Ovary (tissue), 10 donors: ENCODE measurements at regions of chr3 and their contacts with region 1.

Region 1: GRCh38 chr3:197906023-197906849 is 43.8 kb upstream of the RPL35A start:
- DNase-seq: peak; percentile 90 to 94 (median 93)
- H3K4me3 ChIP-seq: no peak overlapping the region
- H3K27ac ChIP-seq: no peak overlapping the region
- H3K4me1 ChIP-seq: peaks cover 2% of the 10 kb centered on the region
- H3K27me3 ChIP-seq: no peaks in the 10 kb centered on the region
- CTCF ChIP-seq: peak; percentile 80 to 92 (median 89)
- EP300 ChIP-seq: no peak
- POLR2A ChIP-seq: no peak

Region 2: GRCh38 chr3:197749601-197750395 is 156.4 kb before region 1 on chr3 and contains the start of gene FYTTD1:
- intact Hi-C with region 1: no loop called
- DNase-seq: peak; percentile 86 to 95 (median 90)
- H3K4me3 ChIP-seq: peak within 1 kb of the TSS; percentile 85
- H3K27ac ChIP-seq: peak within 1 kb of the TSS; percentile 87 to 93
- H3K4me1 ChIP-seq: peaks cover 4% of the 10 kb centered on the region
- H3K27me3 ChIP-seq: no peaks in the 10 kb centered on the region
- CTCF ChIP-seq: peak; percentile 37 to 82 (median 70)
- EP300 ChIP-seq: no peak
- POLR2A ChIP-seq: peak; percentile 85
- total RNA-seq, gene FYTTD1: 23.8 to 70.5 (median 58.0) TPM

Region 3: DNA sequence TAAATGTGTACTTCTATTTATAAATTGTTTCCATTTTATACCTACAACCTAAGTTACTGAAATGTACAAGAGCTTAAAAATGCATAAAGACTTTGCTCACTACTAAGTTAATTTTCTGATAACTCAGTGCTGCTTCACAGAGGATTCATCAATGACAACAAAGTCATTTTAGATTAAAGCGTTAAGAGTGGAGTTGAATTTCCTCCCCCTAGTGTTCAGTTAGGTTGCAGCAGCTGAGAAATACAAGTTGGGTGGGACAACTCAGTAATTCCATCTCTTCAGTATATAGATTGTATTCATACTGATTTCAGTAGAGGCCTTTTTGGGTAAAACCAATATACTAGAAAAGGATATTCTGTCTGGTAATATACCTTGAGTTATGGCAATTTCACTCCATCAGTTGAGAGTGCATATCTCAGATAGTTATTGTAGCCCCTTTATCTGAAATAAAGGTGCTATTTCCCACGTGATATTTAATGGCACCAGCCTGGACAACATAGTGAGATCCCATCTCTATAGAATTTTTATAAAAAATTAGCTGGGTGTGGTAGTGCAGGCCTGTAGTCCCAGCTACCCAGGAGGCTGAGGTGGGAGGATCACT is 36.8 kb after region 1 on chr3:
- intact Hi-C with region 1: loop called in 1 of 4 experiments (anchors 5 kb)
- DNase-seq: no peak
- H3K4me3 ChIP-seq: no peak overlapping the region
- H3K27ac ChIP-seq: no peak overlapping the region
- H3K4me1 ChIP-seq: no peaks in the 10 kb centered on the region
- H3K27me3 ChIP-seq: no peaks in the 10 kb centered on the region
- CTCF ChIP-seq: peak in 2 of 3 donors; percentile 41 to 47
- EP300 ChIP-seq: no peak
- POLR2A ChIP-seq: no peak

Region 4: DNA sequence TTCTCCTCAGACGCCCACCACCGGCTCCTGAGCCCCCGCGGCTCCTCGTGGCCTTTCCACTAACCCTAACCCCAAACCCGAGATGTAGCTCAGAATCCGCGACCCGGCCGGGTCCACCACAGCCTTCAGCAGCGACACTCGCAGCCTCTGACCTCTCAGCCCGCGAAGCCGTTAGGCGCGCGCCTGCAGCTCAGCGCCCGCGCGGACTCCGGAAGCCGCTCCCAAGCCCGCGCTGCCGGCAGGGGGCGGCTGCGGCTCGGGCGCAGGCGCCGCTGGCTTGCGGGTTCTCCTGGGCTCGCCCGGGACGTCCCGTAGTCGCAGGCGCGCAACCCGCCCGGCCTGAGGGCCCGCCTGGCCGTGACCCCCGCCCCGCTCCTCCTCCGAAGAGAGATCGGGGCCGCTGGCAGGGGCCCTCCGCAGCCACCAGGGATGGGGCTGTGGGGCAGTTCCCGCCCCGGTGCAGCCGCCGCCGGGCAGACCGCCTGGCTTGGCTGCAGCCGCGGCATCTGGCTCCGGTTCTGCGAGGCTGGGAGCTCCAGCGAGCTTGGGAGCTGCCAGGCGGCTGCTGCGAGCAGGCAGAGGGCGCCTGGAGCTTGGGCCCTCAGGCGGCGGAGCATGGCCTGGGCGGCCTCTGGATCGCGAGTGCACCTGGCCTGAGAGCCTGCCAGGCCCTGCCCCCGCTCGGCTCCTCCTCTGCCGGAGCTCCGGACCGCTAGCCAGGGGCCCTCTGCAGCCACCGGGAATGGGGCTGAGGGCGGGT is 174.5 kb after region 1 on chr3:
- intact Hi-C with region 1: loop called in 1 of 4 experiments (anchors 10 kb)
- DNase-seq: peak; percentile 34 to 81 (median 51)
- H3K4me3 ChIP-seq: no peak overlapping the region
- H3K27ac ChIP-seq: no peak overlapping the region
- H3K4me1 ChIP-seq: peaks cover 7% of the 10 kb centered on the region
- H3K27me3 ChIP-seq: no peaks in the 10 kb centered on the region
- CTCF ChIP-seq: peak in 1 of 3 donors; percentile 59
- EP300 ChIP-seq: no peak
- POLR2A ChIP-seq: no peak